Caco-2 (cell line): ENCODE measurements at regions of chr6 and their contacts with region 1.

Region 1: GRCh38 chr6:90574610-90575009 is 12.3 kb downstream of the MAP3K7 start:
- DNase-seq: no peak
- H3K4me3 ChIP-seq: no peak overlapping the region
- H3K4me3 Mint-ChIP-seq: no peak overlapping the region
- H3K27ac Mint-ChIP-seq: no peak overlapping the region
- H3K4me1 ChIP-seq: no peaks in the 10 kb centered on the region; the same call in 1 of the 2 replicates
- H3K4me1 Mint-ChIP-seq: no peaks in the 10 kb centered on the region
- H3K27me3 ChIP-seq: no peaks in the 10 kb centered on the region
- H3K27me3 Mint-ChIP-seq: no peaks in the 10 kb centered on the region
- CTCF ChIP-seq: no peak

Region 2: GRCh38 chr6:90497411-90497810 is 77.2 kb before region 1 on chr6:
- CTCF ChIA-PET with region 1: no interaction called
- POLR2A ChIA-PET with region 1: no interaction called
- intact Hi-C with region 1: loop called (anchors 2 kb)
- DNase-seq: peak; percentile 35 to 42
- H3K4me3 ChIP-seq: no peak overlapping the region
- H3K4me3 Mint-ChIP-seq: no peak overlapping the region
- H3K27ac Mint-ChIP-seq: no peak overlapping the region
- H3K4me1 ChIP-seq: peaks cover 10% of the 10 kb centered on the region
- H3K4me1 Mint-ChIP-seq: no peaks in the 10 kb centered on the region
- H3K27me3 ChIP-seq: no peaks in the 10 kb centered on the region; the same call in 1 of the 2 replicates
- H3K27me3 Mint-ChIP-seq: peaks cover 9% of the 10 kb centered on the region
- CTCF ChIP-seq: peak; percentile 12 to 45